ENCODE measurements at regions of chr10 and their contacts with region 1.

Region 1: DNA sequence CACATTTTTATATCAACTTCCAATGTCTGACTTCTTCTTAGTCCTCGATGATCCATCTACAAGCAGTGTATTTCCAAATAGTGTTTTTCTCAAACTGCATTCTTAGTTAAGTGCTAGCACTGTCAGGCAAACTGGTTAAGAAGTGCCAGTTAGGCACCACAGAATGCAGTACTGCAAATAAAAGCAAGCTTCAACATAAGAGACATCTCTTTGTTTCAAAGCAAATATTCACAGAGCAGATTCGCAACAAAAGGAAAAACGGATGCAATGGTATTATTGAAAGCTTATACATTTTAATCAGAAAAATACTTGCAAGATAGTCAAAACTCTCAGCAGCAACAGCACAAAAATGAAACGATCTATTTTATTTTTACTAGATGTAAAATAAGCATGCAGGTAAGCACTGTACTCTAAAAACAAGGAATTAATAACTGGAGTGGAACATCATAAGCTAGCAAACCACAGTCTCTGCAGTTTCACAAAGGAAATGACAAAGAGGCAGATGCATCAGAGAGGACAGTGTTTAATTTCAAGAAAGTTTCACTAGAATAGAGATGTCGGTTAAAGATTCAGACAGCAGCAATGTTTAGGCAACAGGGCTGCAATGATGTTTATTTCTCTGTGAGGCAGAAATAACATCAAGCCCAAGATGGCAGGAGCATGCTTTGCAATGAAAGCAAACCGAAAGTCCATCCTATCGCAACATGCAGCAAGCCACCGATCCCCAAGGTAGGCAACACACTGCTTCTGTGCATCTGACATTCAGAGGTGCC is 82.0 kb downstream of the FGFR2 start:
- DNase-seq: peak; percentile 19
- H3K4me3 Mint-ChIP-seq: no peak overlapping the region
- H3K27ac Mint-ChIP-seq: no peak overlapping the region
- H3K4me1 Mint-ChIP-seq: peaks cover 9% of the 10 kb centered on the region
- H3K27me3 Mint-ChIP-seq: peaks cover 6% of the 10 kb centered on the region

Region 2: GRCh38 chr10:121448766-121449421 is 67.4 kb before region 1 on chr10:
- CTCF ChIA-PET with region 1: no interaction called
- POLR2A ChIA-PET with region 1: no interaction called
- intact Hi-C with region 1: loop called (anchors 2 kb)
- DNase-seq: no peak
- H3K4me3 Mint-ChIP-seq: no peak overlapping the region
- H3K27ac Mint-ChIP-seq: no peak overlapping the region
- H3K4me1 Mint-ChIP-seq: no peaks in the 10 kb centered on the region
- H3K27me3 Mint-ChIP-seq: no peaks in the 10 kb centered on the region

Region 3: GRCh38 chr10:121598207-121598862 is 82.1 kb after region 1 on chr10 and contains the start of gene FGFR2:
- CTCF ChIA-PET with region 1: no interaction called
- POLR2A ChIA-PET with region 1: no interaction called
- intact Hi-C with region 1: loop called (anchors 5 kb)
- DNase-seq: peak; percentile 38
- H3K4me3 Mint-ChIP-seq: no peak within 1 kb of the TSS
- H3K27ac Mint-ChIP-seq: no peak within 1 kb of the TSS
- H3K4me1 Mint-ChIP-seq: peaks cover 3% of the 10 kb centered on the region
- H3K27me3 Mint-ChIP-seq: peaks cover 48% of the 10 kb centered on the region
- total RNA-seq, gene FGFR2: 0.05 to 0.19 TPM